Transverse colon (tissue), 4 donors: ENCODE measurements at regions of chr1 and their contacts with region 1.

Region 1: DNA sequence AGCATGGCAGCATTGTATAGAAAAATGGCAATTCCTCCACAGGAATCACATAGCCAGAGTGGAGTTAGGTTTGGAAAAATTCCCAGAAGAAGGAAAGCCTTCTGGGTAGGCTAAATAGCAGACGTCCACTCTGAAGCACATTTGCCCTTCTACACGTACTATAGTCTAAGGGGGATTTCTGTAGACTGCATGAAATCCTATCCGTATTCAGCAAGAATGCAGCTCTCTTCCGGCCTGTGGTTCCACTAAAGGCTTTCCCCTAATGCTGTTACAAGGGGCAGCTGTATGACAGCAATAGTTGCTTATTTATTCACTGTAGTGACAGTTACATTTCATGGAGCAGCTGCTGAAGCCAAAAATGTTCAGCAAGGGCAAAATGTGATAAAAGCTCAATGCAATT is 263.6 kb downstream of the RWDD3 start:
- DNase-seq: no peak
- H3K4me3 ChIP-seq: no peak overlapping the region
- H3K27ac ChIP-seq: no peak overlapping the region
- H3K4me1 ChIP-seq: no peaks in the 10 kb centered on the region
- H3K27me3 ChIP-seq: no peaks in the 10 kb centered on the region
- CTCF ChIP-seq: no peak
- EP300 ChIP-seq: no peak
- POLR2A ChIP-seq: no peak

Region 2: DNA sequence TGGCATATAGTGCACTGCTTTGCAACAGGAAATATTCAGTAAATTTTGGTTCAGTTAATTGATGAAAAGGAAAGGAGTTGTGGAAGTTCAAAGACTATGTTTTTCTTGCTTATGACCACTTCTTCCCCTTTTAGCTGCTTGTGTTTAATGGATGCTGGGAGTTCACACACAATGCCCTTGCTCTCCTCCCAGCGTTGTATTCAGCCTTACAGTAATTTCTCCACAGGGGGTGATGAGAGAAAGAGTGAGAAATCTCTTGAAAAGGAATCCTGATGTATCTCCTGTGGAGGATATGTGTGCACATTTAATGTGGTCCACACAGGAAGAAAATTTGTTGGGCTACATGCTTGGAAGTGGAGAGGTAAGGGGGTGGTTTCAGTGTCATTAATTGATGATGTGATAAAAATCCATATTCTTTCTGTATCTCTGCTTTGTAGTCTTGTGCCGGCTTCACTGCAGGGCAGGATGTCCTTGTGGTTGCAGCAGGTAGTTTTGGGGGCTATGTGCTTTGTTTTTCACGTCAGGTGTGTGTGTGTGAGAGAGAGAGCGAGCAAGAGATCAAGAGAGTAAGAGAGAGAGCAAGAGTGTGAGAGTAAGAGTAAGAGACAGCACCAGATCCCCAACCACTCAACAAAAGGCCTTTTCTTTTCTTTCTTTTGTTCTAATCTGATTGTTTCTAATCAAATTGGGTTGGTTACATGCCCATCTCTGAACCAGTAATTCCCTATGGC is 59.2 kb before region 1 on chr1:
- in situ Hi-C with region 1: loop called in 1 of 4 experiments (anchors 10 kb)
- intact Hi-C with region 1: no loop called
- DNase-seq: no peak
- H3K4me3 ChIP-seq: no peak overlapping the region
- H3K27ac ChIP-seq: no peak overlapping the region
- H3K4me1 ChIP-seq: no peaks in the 10 kb centered on the region
- H3K27me3 ChIP-seq: no peaks in the 10 kb centered on the region
- CTCF ChIP-seq: no peak
- EP300 ChIP-seq: no peak
- POLR2A ChIP-seq: no peak

Region 3: DNA sequence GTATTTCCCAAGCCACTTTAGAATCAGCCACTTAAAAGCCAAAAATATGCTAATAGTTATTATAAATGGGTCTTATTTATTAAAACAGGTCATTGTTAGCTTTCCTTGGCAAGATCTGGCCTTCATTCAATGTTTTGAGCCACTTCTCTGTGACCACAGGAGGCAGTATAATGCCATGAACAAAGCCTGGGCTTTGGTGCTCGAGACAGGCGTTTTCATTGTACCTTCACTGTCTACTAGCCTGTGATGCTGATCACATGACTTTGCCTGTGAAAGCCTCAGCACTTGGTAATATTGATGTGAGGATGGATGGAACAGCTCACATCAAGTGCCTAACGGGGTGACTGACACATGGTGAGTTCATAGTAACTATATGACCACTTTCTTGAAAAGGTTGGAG is 46.5 kb before region 1 on chr1:
- in situ Hi-C with region 1: no loop called
- intact Hi-C with region 1: no loop called
- DNase-seq: no peak
- H3K4me3 ChIP-seq: no peak overlapping the region
- H3K27ac ChIP-seq: no peak overlapping the region
- H3K4me1 ChIP-seq: no peaks in the 10 kb centered on the region
- H3K27me3 ChIP-seq: no peaks in the 10 kb centered on the region
- CTCF ChIP-seq: peak in 1 of 5 experiments; percentile 5
- EP300 ChIP-seq: no peak
- POLR2A ChIP-seq: no peak